Breast epithelium (tissue), 4 donors: ENCODE measurements at regions of chr12 and their contacts with region 1.

Region 1: GRCh38 chr12:85405781-85406522 is 125.9 kb downstream of the ALX1 start:
- DNase-seq: no peak
- H3K4me3 ChIP-seq: no peak overlapping the region
- H3K27ac ChIP-seq: no peak overlapping the region
- H3K4me1 ChIP-seq: no peaks in the 10 kb centered on the region
- H3K27me3 ChIP-seq: no peaks in the 10 kb centered on the region
- CTCF ChIP-seq: no peak
- POLR2A ChIP-seq: no peak

Region 2: DNA sequence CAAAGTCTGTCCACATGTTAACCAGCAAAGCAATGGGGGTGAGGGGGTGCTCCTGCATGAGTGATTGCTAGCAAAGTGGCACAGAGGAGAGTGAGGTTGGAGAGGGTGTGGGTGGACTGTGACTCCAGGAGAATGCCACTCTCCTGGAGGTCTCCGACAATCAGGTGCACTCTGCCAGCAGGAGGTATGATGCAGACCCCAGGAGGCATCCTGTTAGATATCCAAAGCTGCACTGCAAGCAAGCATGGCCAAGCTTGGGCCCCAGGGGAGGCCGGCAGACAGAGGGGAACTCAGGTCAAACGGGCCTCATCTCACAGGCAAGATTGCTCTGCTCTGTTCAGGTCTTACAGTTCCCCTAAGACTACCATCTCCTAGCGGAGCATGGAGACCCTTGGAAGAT is 199.4 kb before region 1 on chr12:
- intact Hi-C with region 1: loop called (anchors 5 kb)
- DNase-seq: no peak
- H3K4me3 ChIP-seq: no peak overlapping the region
- H3K27ac ChIP-seq: no peak overlapping the region
- H3K4me1 ChIP-seq: no peaks in the 10 kb centered on the region
- H3K27me3 ChIP-seq: no peaks in the 10 kb centered on the region
- CTCF ChIP-seq: no peak
- POLR2A ChIP-seq: no peak